Panc1 (cell line): ENCODE measurements at regions of chr12 and their contacts with region 1.

Region 1: DNA sequence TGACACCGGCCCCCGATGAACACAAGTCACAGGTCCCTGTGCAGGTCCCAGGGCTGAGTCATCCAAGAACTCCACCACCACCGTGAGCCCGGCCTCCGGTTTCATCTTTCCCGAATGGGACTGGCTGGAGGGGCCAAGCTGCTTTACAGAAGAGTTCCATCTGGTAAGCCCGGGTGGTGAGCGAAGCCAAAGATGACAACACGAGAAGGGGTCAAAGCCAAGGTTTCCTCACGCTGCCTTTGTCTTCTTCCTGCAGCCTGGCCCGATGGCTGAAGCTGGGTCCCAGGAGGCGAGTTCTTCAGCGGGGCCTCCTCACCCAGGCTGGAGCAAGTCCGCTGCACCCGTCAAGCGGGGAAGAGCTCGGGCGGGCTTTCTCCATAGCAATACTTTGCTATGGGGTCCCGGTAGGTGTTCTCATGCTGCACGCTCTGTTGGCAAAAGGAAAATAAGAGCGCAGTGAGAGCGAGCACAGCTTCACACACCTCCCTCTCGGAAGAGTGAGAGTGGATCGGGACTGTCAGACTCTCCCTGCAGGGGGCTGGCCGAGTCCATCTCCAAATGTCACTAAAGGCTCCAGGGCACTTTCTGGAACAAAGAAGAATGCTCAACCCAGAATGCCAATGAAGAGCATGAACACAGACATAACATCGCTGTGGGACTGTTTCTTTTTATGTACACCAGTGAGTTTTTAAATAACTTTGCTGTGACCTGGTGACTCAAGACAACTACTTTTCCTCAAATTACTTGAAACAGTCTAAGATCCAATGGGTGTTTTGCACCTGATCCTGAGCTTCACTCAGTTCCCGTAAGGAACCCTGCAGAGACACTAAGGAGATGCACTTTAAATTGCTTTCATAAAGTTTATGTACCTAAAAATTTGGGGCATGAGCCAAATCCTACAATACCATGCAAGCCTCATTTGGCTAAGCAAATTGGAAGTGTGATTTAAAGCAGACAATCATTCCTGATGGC is 20.1 kb downstream of the SPRING1 start:
- DNase-seq: no peak
- ATAC-seq: no peak
- H3K4me3 ChIP-seq: no peak overlapping the region
- H3K27ac ChIP-seq: no peak overlapping the region
- H3K4me1 ChIP-seq: peaks cover 4% of the 10 kb centered on the region; the same call in 1 of the 2 replicates
- H3K27me3 ChIP-seq: no peaks in the 10 kb centered on the region
- CTCF ChIP-seq: no peak

Region 2: DNA sequence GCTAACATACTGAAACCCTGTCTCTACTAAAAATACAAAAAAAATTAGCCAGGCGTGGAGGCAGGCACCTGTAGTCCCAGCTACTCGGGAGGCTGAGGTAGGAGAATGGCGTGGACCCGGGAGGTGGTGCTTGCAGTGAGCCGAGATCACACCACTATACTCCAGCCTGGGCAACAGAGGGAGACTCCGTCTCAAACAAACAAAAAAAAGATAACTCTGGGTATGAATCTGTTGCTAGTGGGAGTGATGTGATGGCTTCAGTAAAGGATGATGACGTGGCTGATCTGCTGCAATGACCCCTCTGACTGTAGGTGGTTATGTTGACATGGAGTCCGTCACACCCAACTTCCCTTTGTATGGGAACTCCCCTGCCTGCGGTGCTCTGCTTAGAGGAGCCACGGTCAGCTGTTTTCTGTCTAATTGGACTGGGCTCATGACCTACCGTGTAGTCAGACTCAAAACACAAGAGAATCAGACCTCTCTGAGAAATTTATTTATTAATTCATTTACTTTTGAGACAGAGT is 381.1 kb before region 1 on chr12:
- CTCF ChIA-PET with region 1: no interaction called
- POLR2A ChIA-PET with region 1: no interaction called
- in situ Hi-C with region 1: no loop called
- intact Hi-C with region 1: no loop called
- DNase-seq: no peak
- ATAC-seq: no peak
- H3K4me3 ChIP-seq: no peak overlapping the region
- H3K27ac ChIP-seq: no peak overlapping the region
- H3K4me1 ChIP-seq: peaks cover 10% of the 10 kb centered on the region
- H3K27me3 ChIP-seq: no peaks in the 10 kb centered on the region
- CTCF ChIP-seq: no peak

Region 3: DNA sequence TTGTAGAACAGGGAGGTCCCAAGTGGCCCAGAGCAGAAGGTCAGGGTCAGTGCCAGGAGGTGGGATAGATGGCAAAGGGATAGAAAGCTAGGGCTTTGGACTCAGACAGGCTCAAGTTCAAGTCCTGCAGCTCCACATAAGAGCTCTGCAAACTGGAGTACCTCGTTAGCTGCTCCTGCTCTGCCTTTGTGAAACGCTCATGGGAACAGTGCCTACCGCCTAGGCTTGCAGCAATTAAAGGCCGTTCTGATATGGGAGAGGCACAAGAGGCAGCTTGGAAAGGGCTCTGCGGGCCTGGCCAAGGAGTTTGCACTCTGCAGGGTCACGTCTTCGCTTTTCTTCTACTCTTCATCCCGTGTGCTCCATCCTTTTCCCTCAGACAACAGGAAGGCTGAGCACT is 104.5 kb before region 1 on chr12:
- CTCF ChIA-PET with region 1: no interaction called
- POLR2A ChIA-PET with region 1: interaction called, 10 read pairs
- in situ Hi-C with region 1: no loop called
- intact Hi-C with region 1: no loop called
- DNase-seq: no peak
- ATAC-seq: peak; percentile 33; the same call in 1 of the 2 replicates
- H3K4me3 ChIP-seq: no peak overlapping the region
- H3K27ac ChIP-seq: no peak overlapping the region
- H3K4me1 ChIP-seq: peaks cover 5% of the 10 kb centered on the region
- H3K27me3 ChIP-seq: no peaks in the 10 kb centered on the region
- CTCF ChIP-seq: no peak

Region 4: GRCh38 chr12:117388951-117389446 is 671.2 kb after region 1 on chr12:
- CTCF ChIA-PET with region 1: no interaction called
- POLR2A ChIA-PET with region 1: no interaction called
- in situ Hi-C with region 1: no loop called
- intact Hi-C with region 1: no loop called
- DNase-seq: no peak
- ATAC-seq: no peak
- H3K4me3 ChIP-seq: no peak overlapping the region
- H3K27ac ChIP-seq: no peak overlapping the region
- H3K4me1 ChIP-seq: no peaks in the 10 kb centered on the region
- H3K27me3 ChIP-seq: no peaks in the 10 kb centered on the region
- CTCF ChIP-seq: no peak